ENCODE measurements at regions of chr10 and their contacts with region 1.

Region 1: GRCh38 chr10:84205049-84205852 is 10.9 kb downstream of the CDHR1 start:
- DNase-seq: peak; percentile 27
- ATAC-seq: peak; percentile 84
- H3K4me3 ChIP-seq: no peak overlapping the region
- H3K27ac ChIP-seq: no peak overlapping the region
- H3K4me1 ChIP-seq: no peaks in the 10 kb centered on the region
- H3K27me3 ChIP-seq: peaks cover 0 to 7% of the 10 kb centered on the region in 2 experiments
- CTCF ChIP-seq: peak; percentile 96 to 99 (median 98); a peak in 5 of 6 replicates
- EP300 ChIP-seq: no peak
- POLR2A ChIP-seq: no peak
- RAD21 ChIP-seq: peak; percentile 94

Region 2: GRCh38 chr10:84059523-84059922 is 145.7 kb before region 1 on chr10:
- CTCF ChIA-PET with region 1: interaction called, 7 read pairs
- POLR2A ChIA-PET with region 1: no interaction called
- RAD21 ChIA-PET with region 1: no interaction called
- SMC1A ChIA-PET with region 1: no interaction called
- in situ Hi-C with region 1: no loop called
- intact Hi-C with region 1: loop called (anchors 1 kb)
- DNase-seq: no peak
- ATAC-seq: peak; percentile 44; the same call in 2 of the 3 replicates
- H3K4me3 ChIP-seq: no peak overlapping the region
- H3K27ac ChIP-seq: no peak overlapping the region
- H3K4me1 ChIP-seq: no peaks in the 10 kb centered on the region
- H3K27me3 ChIP-seq: peaks cover 0 to 3% of the 10 kb centered on the region in 2 experiments; a peak in 3 of 4 replicates
- CTCF ChIP-seq: no peak; a peak in 2 of 6 replicates
- EP300 ChIP-seq: no peak
- POLR2A ChIP-seq: no peak
- RAD21 ChIP-seq: peak; percentile 33; the same call in 1 of the 2 replicates

Region 3: GRCh38 chr10:84147347-84147746 is 57.9 kb before region 1 on chr10:
- CTCF ChIA-PET with region 1: interaction called, 788 read pairs
- POLR2A ChIA-PET with region 1: interaction called, 3 read pairs
- RAD21 ChIA-PET with region 1: interaction called, 74 read pairs
- SMC1A ChIA-PET with region 1: interaction called, 155 read pairs
- in situ Hi-C with region 1: loop called (anchors 10 kb)
- intact Hi-C with region 1: loop called (anchors 1 kb)
- DNase-seq: no peak
- ATAC-seq: no peak
- H3K4me3 ChIP-seq: no peak overlapping the region
- H3K27ac ChIP-seq: no peak overlapping the region
- H3K4me1 ChIP-seq: no peaks in the 10 kb centered on the region
- H3K27me3 ChIP-seq: no peaks in the 10 kb centered on the region
- CTCF ChIP-seq: no peak
- EP300 ChIP-seq: no peak
- POLR2A ChIP-seq: no peak
- RAD21 ChIP-seq: no peak

Region 4: GRCh38 chr10:84166620-84167288 is 38.5 kb before region 1 on chr10:
- CTCF ChIA-PET with region 1: interaction called, 788 read pairs
- POLR2A ChIA-PET with region 1: no interaction called
- RAD21 ChIA-PET with region 1: interaction called, 8 read pairs
- SMC1A ChIA-PET with region 1: interaction called, 23 read pairs
- in situ Hi-C with region 1: no loop called
- intact Hi-C with region 1: loop called (anchors 2 kb)
- DNase-seq: no peak
- ATAC-seq: peak; percentile 71
- H3K4me3 ChIP-seq: peak overlapping the region; percentile 81
- H3K27ac ChIP-seq: peak overlapping the region; percentile 54; the same call in 1 of the 2 replicates
- H3K4me1 ChIP-seq: peaks cover 24% of the 10 kb centered on the region
- H3K27me3 ChIP-seq: no peaks in the 10 kb centered on the region
- CTCF ChIP-seq: no peak
- EP300 ChIP-seq: no peak
- POLR2A ChIP-seq: peak; percentile 26; the same call in 1 of the 2 replicates
- RAD21 ChIP-seq: no peak

Region 5: DNA sequence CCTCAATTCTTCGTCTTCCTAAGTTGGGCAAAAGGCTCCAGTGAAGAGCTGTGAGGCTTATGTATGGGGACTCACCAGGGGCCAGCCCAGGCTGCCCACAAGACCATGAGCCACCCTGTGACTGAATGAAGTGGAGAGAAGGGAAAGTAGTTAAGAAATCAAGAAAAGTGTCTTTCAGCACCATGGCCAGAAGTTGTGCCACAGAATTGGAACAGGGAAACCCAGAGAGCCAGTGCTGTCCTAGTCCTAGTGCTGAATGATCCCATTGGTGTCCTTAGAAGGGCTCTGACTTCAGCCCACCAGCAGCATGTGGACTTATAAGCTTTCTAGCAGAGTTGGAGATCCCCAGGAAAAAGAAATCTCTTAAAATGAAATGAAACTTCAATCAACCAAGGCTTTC is 86.1 kb after region 1 on chr10:
- CTCF ChIA-PET with region 1: no interaction called
- POLR2A ChIA-PET with region 1: no interaction called
- RAD21 ChIA-PET with region 1: no interaction called
- SMC1A ChIA-PET with region 1: no interaction called
- in situ Hi-C with region 1: no loop called
- intact Hi-C with region 1: no loop called
- DNase-seq: no peak
- ATAC-seq: peak; percentile 44
- H3K4me3 ChIP-seq: no peak overlapping the region
- H3K27ac ChIP-seq: no peak overlapping the region
- H3K4me1 ChIP-seq: peaks cover 19% of the 10 kb centered on the region
- H3K27me3 ChIP-seq: no peaks in the 10 kb centered on the region; a peak in 1 of 4 replicates
- CTCF ChIP-seq: no peak
- EP300 ChIP-seq: no peak
- POLR2A ChIP-seq: no peak
- RAD21 ChIP-seq: no peak

Measured in GM12878 (cell line).